ENCODE measurements at regions of chr12 and their contacts with region 1.

Region 1: DNA sequence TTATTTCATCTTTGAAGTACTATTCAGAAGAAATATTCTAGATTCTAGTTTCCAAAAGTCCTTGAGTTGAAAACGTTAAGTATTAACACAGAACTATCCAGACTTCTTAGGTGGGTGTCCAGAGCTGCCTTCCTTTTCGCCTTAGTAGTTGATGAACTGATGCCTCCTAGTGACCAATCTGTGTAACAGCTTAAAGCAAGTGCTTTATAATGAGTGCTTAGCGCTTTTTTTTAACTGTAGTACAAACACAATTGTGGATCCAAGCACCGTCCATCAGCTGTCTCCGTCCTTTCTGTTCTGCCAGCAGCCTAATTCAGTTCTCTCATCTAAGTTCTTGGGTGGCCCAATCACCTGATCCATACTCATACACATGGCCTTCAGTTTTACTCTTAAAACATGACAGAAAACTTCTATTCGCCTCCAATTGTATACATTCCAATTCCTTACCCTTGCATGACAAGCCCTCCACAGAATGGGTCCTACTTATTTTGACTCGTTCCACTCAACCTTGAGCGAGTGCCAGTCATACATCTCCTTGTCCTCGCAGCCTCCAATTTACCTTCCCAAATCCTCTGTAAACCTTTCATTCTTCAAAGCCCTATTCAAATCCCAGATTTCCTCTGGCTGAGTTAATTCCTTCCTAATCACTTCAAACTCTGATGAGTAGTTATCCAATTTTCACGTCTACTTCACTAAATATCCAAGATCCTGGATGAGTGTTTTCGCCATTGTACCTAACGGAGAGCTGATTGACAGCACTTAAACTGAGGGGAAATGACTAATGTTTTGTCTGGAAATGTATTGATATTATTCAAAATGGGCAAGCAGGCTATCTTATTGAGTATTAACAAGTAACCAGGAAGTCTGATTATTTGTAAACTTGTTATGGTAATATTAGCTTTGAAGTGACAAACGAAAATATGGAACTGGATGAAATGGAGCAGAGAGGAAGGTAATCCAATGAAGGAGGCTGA is 5.8 kb upstream of the PHLDA1 start:
- DNase-seq: peak; percentile 80
- H3K4me3 Mint-ChIP-seq: no peak overlapping the region
- H3K27ac Mint-ChIP-seq: no peak overlapping the region
- H3K4me1 Mint-ChIP-seq: peaks cover 24% of the 10 kb centered on the region
- H3K27me3 Mint-ChIP-seq: no peaks in the 10 kb centered on the region

Region 2: GRCh38 chr12:75814851-75815754 is 222.3 kb before region 1 on chr12:
- intact Hi-C with region 1: loop called (anchors 1 kb)
- DNase-seq: no peak
- H3K4me3 Mint-ChIP-seq: no peak overlapping the region
- H3K27ac Mint-ChIP-seq: no peak overlapping the region
- H3K4me1 Mint-ChIP-seq: peaks cover 13% of the 10 kb centered on the region
- H3K27me3 Mint-ChIP-seq: peaks cover 3% of the 10 kb centered on the region

Region 3: GRCh38 chr12:76106631-76107030 is 69.2 kb after region 1 on chr12:
- intact Hi-C with region 1: no loop called
- DNase-seq: no peak
- H3K4me3 Mint-ChIP-seq: no peak overlapping the region
- H3K27ac Mint-ChIP-seq: no peak overlapping the region
- H3K4me1 Mint-ChIP-seq: no peaks in the 10 kb centered on the region
- H3K27me3 Mint-ChIP-seq: peaks cover 18% of the 10 kb centered on the region

Region 4: DNA sequence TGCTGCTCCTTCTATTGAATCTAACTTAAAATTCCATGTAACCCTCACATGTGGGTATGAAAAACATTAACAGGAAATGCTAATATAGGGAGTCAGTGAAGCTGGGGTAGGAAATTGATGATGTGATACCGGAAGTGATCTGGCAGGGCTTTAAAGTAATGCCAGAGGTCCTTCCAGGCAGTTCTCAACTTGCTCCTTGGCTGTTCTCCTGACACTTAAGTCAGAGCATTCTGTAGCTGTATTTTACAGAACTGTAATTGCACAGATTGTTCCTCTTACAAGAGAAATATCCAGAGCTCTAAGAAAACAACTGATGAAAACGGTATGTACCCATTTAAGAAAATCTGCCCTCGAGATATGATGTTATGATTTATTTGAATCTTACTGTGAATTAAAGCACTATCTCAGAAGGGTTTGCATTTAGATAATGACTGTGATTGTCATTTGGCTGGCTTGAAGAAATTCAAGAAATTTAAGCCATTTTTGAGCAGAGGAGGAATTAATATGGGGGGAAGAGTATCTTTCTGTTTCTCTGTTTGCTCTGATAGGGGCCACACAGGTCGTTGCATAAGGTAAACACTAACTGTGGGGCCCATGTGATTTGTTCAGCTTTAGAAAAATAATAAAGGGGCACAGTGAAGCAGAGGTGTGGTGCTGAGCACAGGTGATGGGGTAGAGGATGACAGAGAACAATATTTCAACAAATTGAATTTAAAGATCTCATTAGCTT is 222.4 kb after region 1 on chr12:
- intact Hi-C with region 1: no loop called
- DNase-seq: no peak
- H3K4me3 Mint-ChIP-seq: no peak overlapping the region
- H3K27ac Mint-ChIP-seq: no peak overlapping the region
- H3K4me1 Mint-ChIP-seq: no peaks in the 10 kb centered on the region
- H3K27me3 Mint-ChIP-seq: peaks cover 12% of the 10 kb centered on the region

Region 5: GRCh38 chr12:76455582-76456345 is 418.3 kb after region 1 on chr12:
- intact Hi-C with region 1: loop called (anchors 5 kb)
- DNase-seq: peak; percentile 73
- H3K4me3 Mint-ChIP-seq: no peak overlapping the region
- H3K27ac Mint-ChIP-seq: no peak overlapping the region
- H3K4me1 Mint-ChIP-seq: peaks cover 14% of the 10 kb centered on the region
- H3K27me3 Mint-ChIP-seq: no peaks in the 10 kb centered on the region